Calu3 (cell line): ENCODE measurements at regions of chr3 and their contacts with region 1.

Region 1: DNA sequence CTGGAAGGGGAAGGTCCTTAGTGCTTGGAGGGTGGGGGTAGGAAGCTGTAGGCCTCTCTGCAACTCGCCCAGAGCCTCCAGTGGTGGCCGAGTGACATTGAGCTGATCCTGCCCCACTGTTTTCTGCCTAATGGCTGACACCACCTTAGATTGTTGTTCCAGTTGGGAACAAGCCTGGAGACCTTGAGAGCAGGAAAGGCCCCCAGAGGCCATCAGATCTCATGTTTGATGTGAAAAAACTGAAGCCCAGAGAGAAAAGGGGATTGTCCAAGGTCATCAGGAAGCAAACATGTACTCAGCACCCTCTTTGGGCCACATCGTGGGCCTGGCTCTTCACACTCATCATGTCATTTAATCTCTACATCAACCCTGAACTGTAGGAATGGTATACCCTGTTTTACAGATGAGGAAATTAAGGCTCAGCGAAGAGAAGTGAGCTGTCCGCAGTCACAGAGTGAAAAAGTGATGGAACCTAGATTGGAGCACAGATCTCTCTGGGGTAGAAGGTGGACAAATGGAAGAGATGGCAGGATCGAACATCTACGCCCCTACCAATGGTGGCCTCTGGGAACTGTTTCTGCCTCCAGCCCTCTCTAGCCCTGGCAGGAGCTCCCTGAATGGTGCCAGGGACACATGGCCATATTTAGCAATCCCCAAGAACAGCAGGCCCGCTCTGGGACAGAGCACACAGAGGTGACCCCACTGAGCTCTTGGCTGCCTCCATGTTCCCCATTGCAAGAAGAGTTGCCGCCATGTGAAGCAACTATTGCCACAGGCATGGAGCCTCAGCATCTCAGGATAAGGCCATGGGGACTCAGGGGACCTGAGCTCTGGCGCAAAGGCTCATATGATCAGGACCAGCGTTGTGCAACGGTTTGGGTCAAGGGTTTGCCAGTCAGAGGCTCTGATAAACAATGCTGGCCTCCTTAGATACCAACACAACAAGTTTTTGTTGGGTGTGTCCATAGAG is 31.6 kb upstream of the TSEN2 start:
- DNase-seq: no peak
- H3K4me3 Mint-ChIP-seq: no peak overlapping the region
- H3K27ac Mint-ChIP-seq: no peak overlapping the region
- H3K4me1 Mint-ChIP-seq: peaks cover 20% of the 10 kb centered on the region
- H3K27me3 Mint-ChIP-seq: no peaks in the 10 kb centered on the region
- CTCF ChIP-seq: no peak

Region 2: DNA sequence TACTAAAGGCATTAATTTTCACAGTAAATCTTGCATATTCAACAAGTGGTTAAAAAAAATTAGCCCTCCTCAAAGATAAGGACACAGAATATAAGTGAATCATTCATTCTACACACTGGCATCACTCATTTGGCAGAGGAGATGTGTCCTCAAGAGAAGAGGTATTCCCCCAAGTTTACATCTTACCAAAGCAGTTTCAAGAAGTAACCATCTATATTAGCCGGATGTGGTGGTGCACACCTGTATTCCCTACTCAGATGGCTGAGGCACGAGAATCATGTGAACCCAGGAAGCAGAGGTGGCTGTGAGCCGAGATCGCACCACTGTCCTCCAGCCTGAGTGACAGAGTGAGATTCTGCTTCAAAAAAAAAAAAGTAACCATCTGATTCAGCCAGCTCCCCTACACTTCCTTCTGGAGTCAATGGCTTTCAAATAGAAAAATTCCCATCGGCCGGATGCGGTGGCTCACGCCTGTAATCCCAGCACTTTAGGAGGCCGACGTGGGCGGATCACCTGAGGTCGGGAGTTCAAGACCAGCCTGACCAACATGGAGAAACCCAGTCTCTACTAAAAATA is 195.8 kb after region 1 on chr3:
- CTCF ChIA-PET with region 1: interaction called, 10 read pairs
- intact Hi-C with region 1: no loop called
- DNase-seq: no peak
- H3K4me3 Mint-ChIP-seq: no peak overlapping the region
- H3K27ac Mint-ChIP-seq: no peak overlapping the region
- H3K4me1 Mint-ChIP-seq: no peaks in the 10 kb centered on the region
- H3K27me3 Mint-ChIP-seq: no peaks in the 10 kb centered on the region
- CTCF ChIP-seq: no peak